AG04450 (cell line): ENCODE measurements at regions of chr7 and their contacts with region 1.

Region 1: DNA sequence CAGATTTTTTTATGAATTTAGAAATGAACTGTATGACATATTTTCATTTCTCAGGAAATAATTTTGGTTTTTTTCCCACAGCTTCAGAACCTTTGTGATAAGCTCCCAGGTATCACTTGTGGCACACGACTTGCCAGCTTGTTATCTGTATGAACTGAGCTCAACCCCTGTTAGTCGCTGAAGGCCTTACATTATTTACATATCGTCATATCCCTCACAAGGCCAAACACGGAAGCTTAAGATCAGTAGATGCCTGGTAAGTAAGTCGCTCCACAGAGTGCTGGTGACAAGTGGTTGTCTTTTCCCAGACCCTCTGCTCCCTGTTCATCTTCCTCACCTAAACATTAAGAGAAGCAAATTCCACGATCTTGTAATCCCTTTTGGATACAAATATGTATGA is 55.2 kb downstream of the RAPGEF5 start:
- DNase-seq: no peak
- H3K4me3 ChIP-seq: no peak overlapping the region
- H3K27ac ChIP-seq: no peak overlapping the region
- H3K27me3 ChIP-seq: no peaks in the 10 kb centered on the region
- CTCF ChIP-seq: no peak

Region 2: GRCh38 chr7:22278660-22279059 is 23.1 kb before region 1 on chr7:
- CTCF ChIA-PET with region 1: no interaction called
- POLR2A ChIA-PET with region 1: no interaction called
- DNase-seq: no peak
- H3K4me3 ChIP-seq: no peak overlapping the region
- H3K27ac ChIP-seq: no peak overlapping the region
- H3K27me3 ChIP-seq: peaks cover 2% of the 10 kb centered on the region
- CTCF ChIP-seq: no peak

Region 3: GRCh38 chr7:22316914-22317313 is 15.1 kb after region 1 on chr7:
- CTCF ChIA-PET with region 1: interaction called, 11 read pairs
- POLR2A ChIA-PET with region 1: no interaction called
- DNase-seq: no peak
- H3K4me3 ChIP-seq: no peak overlapping the region
- H3K27ac ChIP-seq: no peak overlapping the region
- H3K27me3 ChIP-seq: no peaks in the 10 kb centered on the region
- CTCF ChIP-seq: no peak

Region 4: GRCh38 chr7:22589641-22590201 is 287.9 kb after region 1 on chr7:
- CTCF ChIA-PET with region 1: no interaction called
- POLR2A ChIA-PET with region 1: no interaction called
- DNase-seq: no peak
- H3K4me3 ChIP-seq: no peak overlapping the region
- H3K27ac ChIP-seq: no peak overlapping the region
- H3K27me3 ChIP-seq: no peaks in the 10 kb centered on the region
- CTCF ChIP-seq: no peak